SK-N-SH (cell line): ENCODE measurements at regions of chr1 and their contacts with region 1.

Region 1: GRCh38 chr1:27760426-27760825 is 12.6 kb upstream of the STX12 start:
- DNase-seq: no peak
- H3K4me3 ChIP-seq: no peak overlapping the region
- H3K27ac ChIP-seq: peak overlapping the region in 1 of 2 experiments; percentile 78; a peak in 2 of 4 replicates
- H3K4me1 ChIP-seq: peaks cover 0 to 16% of the 10 kb centered on the region in 2 experiments; a peak in 2 of 4 replicates
- H3K27me3 ChIP-seq: no peaks in the 10 kb centered on the region
- CTCF ChIP-seq: no peak
- EP300 ChIP-seq: no peak
- RAD21 ChIP-seq: peak; percentile 68

Region 2: GRCh38 chr1:27772933-27773825 is 12.8 kb after region 1 on chr1 and contains the start of gene STX12:
- CTCF ChIA-PET with region 1: interaction called, 13 read pairs
- POLR2A ChIA-PET with region 1: interaction called, 19 read pairs
- DNase-seq: peak; percentile 98
- H3K4me3 ChIP-seq: peak within 1 kb of the TSS; percentile 84 to 88
- H3K27ac ChIP-seq: peak within 1 kb of the TSS; percentile 70 to 81
- H3K4me1 ChIP-seq: peaks cover 0 to 5% of the 10 kb centered on the region in 2 experiments; a peak in 2 of 4 replicates
- H3K27me3 ChIP-seq: no peaks in the 10 kb centered on the region
- CTCF ChIP-seq: no peak
- EP300 ChIP-seq: no peak
- RAD21 ChIP-seq: no peak; the same call in 1 of the 2 replicates
- polyA plus RNA-seq, gene STX12: 12.4 and 12.9 TPM in 2 replicates